A549 (cell line): ENCODE measurements at regions of chr11 and their contacts with region 1.

Region 1: DNA sequence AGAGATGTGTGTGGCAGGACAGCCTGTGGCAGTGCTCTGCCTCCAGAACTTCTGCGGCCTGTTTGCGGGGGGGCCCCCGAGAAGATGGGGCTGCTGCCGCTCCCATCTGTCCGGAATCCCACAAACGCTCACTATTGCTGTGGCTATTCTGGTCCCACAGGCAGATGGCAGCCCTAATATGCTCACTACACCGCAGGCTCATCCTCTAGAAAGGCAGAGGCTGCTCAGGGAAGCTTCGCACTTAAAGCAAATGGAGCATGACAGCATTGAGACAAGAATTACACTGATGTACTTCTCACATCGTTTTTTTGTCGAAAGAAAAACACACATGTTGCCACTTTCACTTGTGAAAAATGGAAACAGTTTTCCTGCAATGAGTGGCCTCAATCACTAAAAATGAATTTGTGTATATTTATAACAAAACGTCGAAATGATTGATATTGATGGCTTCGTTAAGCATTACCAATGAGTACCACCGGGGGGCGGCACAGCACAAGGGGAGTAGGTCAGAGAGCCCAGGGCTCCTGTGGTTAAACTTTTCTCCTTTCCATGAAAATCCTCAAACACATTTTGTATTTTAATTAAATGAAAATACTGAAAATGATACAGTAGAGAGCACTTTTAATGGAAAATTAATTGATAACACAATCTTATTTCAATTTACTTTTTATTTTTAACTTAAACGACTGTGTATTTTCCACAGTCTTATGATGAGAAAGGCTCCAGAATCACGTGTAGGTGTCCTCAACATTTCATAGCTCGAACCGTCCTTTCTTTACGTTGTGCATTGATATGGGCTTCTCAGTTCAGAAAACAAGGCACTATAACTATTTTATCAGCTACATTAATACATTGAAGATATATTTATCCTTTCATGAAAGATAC is 69.1 kb downstream of the CTTN start:
- DNase-seq: peak; percentile 51 to 57
- ATAC-seq: peak; percentile 22 to 67; a peak in 3 of 6 replicates
- H3K4me3 ChIP-seq: no peak overlapping the region
- H3K27ac ChIP-seq: no peak overlapping the region
- H3K4me1 ChIP-seq: no peaks in the 10 kb centered on the region
- CTCF ChIP-seq: peak; percentile 92
- EP300 ChIP-seq: no peak
- POLR2A ChIP-seq: no peak
- RAD21 ChIP-seq: peak; percentile 92 to 95

Region 2: GRCh38 chr11:70454197-70454767 is 13.2 kb before region 1 on chr11:
- CTCF ChIA-PET with region 1: interaction called, 20 read pairs
- POLR2A ChIA-PET with region 1: no interaction called
- DNase-seq: no peak
- ATAC-seq: no peak
- H3K4me3 ChIP-seq: no peak overlapping the region
- H3K27ac ChIP-seq: no peak overlapping the region
- H3K4me1 ChIP-seq: peaks cover 8% of the 10 kb centered on the region
- CTCF ChIP-seq: no peak
- EP300 ChIP-seq: no peak
- POLR2A ChIP-seq: no peak
- RAD21 ChIP-seq: no peak

Region 3: DNA sequence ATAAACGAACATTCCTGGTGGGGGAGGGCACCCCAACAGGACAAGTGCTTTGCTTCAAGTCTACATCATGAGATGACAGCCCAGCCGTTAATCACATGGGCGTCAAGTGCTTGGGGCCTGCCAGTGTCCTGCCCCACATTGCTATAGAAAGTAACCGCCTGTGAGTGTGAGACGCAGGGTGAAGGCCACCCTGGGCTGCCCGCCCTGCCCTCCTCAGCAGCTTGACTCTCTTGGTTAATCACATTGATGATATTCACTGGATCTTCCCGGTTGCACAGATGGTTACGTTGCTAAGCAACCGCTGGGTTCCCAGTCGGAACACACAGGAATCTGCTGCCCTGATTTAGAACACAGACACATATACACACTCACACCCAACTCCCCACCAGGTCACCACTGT is 10.2 kb after region 1 on chr11:
- CTCF ChIA-PET with region 1: interaction called, 13 read pairs
- POLR2A ChIA-PET with region 1: no interaction called
- DNase-seq: no peak
- ATAC-seq: no peak
- H3K4me3 ChIP-seq: no peak overlapping the region
- H3K27ac ChIP-seq: no peak overlapping the region
- H3K4me1 ChIP-seq: peaks cover 12% of the 10 kb centered on the region
- CTCF ChIP-seq: no peak
- EP300 ChIP-seq: no peak
- POLR2A ChIP-seq: no peak
- RAD21 ChIP-seq: no peak

Region 4: DNA sequence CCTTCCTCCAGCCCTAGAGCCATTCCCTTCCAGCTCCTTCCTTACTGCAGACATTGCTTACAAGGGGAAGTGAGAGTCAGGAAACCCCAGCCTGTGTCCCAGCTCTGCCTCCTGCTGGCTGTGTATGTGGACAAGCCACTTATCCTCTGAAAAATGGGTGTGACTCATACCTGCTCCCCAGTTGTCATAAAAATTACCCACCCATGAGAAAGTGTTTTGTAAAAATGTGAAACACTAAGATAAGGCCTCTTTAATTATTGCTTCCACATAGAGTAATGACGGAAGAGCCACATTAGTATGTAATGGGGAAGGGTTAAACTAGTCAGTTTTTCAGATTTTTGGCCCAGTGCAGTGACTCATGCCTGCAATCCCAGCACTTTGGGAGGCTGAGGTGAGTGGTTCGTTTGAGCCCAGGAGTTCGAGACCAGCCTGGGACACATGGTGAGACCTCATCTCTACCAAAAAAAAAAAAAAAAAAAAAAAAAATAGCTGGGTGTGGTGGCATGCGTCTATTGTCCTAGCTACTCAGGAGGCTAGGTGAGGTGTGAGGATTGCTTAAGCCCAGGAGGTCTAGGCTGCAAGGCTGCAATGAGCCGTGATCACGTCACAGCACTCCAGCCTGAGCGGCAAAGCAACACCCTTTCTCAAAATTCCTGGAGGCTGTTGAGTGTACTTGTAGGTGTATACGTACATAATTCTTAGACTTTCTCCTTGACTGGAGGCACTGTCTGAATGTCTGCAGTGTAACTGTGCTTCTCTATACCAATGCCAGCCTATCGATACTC is 15.8 kb after region 1 on chr11:
- CTCF ChIA-PET with region 1: interaction called, 13 read pairs
- POLR2A ChIA-PET with region 1: no interaction called
- DNase-seq: peak; percentile 54 to 68
- ATAC-seq: peak; percentile 67 to 74; a peak in 4 of 6 replicates
- H3K4me3 ChIP-seq: no peak overlapping the region
- H3K27ac ChIP-seq: peak overlapping the region in 1 of 2 experiments; percentile 74; a peak in 3 of 6 replicates
- H3K4me1 ChIP-seq: peaks cover 26% of the 10 kb centered on the region
- CTCF ChIP-seq: 0 out of 3 replicates have a peak, but pooled peaks have one; percentile 12
- EP300 ChIP-seq: no peak
- POLR2A ChIP-seq: no peak
- RAD21 ChIP-seq: 0 out of 5 replicates have a peak, but pooled peaks of 1 of the 2 experiments have one; percentile 24

Region 5: GRCh38 chr11:70755410-70756161 is 288.1 kb after region 1 on chr11:
- CTCF ChIA-PET with region 1: interaction called, 22 read pairs
- POLR2A ChIA-PET with region 1: no interaction called
- DNase-seq: peak; percentile 75 to 88
- ATAC-seq: peak; percentile 97 to 100
- H3K4me3 ChIP-seq: no peak overlapping the region
- H3K27ac ChIP-seq: no peak overlapping the region
- H3K4me1 ChIP-seq: no peaks in the 10 kb centered on the region
- CTCF ChIP-seq: peak; percentile 78
- EP300 ChIP-seq: no peak
- POLR2A ChIP-seq: no peak
- RAD21 ChIP-seq: peak; percentile 80 to 82